ENCODE measurements at regions of chr6 and their contacts with region 1.

Region 1: GRCh38 chr6:74249658-74250057 is 553.7 kb downstream of the CD109 start:
- DNase-seq: no peak
- H3K4me3 ChIP-seq: no peak overlapping the region
- H3K27ac ChIP-seq: no peak overlapping the region
- H3K4me1 ChIP-seq: no peaks in the 10 kb centered on the region
- H3K27me3 ChIP-seq: no peaks in the 10 kb centered on the region
- CTCF ChIP-seq: no peak
- POLR2A ChIP-seq: no peak

Region 2: DNA sequence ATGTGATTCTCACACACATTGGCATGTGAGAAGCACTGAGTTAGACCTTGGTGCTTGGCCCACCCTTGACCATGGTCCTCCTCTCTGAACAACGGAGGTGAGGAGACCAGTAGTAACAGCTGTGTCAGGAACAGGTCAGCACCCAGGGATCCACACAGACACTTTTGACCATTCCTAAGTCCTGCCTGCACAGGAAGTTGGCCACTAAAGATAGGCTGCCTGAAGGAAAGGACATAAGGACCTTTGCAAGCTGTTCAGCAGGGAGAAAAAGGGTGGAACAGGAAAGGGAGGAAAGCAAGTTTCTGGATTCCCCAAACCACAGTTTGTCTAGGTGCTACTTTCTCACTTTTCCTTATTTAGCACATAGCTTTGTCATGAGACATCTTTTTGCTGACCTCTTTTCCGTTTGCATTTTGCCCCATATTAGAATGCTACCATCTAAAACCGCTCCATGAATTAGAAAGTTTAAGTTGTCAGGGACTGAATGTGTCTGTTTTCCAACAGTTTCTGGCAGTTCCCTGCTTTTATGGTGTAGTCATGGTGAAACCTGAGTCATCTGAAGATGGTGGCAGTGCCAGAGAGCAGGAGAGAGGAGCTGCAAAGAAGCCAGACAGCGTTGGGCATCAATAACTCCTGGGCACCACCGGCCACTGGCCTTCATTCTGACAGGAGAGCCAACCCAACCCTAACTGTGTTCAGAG is 554.8 kb before region 1 on chr6:
- intact Hi-C with region 1: loop called (anchors 5 kb)
- DNase-seq: no peak
- H3K4me3 ChIP-seq: peak overlapping the region; percentile 61 to 65
- H3K27ac ChIP-seq: peak overlapping the region; percentile 87
- H3K4me1 ChIP-seq: peaks cover 23% of the 10 kb centered on the region
- H3K27me3 ChIP-seq: no peaks in the 10 kb centered on the region
- CTCF ChIP-seq: no peak
- POLR2A ChIP-seq: no peak

Region 3: DNA sequence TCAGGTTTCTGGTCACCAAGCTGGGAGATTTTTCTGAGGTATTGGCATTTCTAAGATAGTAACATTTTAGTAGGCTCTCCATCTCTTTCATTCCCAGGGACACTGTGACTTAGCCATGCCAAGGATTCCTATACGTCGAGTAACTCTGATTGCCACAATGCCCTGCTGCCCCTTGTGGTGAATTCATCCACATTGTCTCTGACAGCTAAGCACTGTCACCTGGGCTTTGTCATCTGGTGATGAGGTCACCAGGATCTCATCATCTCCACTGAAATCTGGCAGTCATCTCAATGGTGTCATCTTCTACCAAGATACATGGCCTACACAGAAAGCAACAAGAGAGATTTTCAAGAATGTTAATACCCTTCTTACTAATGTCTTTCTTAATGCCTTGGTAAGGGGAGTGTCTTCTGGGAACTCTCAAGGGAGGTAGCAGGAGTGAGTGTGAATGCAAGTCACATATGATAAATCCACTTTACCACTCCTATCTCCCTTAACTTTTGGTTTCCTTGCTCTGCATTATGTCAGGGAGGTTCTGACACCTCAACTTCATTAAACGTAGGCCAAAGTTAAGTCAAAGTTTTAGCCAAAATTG is 307.0 kb before region 1 on chr6:
- intact Hi-C with region 1: no loop called
- DNase-seq: no peak
- H3K4me3 ChIP-seq: no peak overlapping the region
- H3K27ac ChIP-seq: no peak overlapping the region
- H3K4me1 ChIP-seq: no peaks in the 10 kb centered on the region
- H3K27me3 ChIP-seq: no peaks in the 10 kb centered on the region
- CTCF ChIP-seq: no peak
- POLR2A ChIP-seq: no peak